ENCODE measurements at regions of chr19 and their contacts with region 1.

Region 1: DNA sequence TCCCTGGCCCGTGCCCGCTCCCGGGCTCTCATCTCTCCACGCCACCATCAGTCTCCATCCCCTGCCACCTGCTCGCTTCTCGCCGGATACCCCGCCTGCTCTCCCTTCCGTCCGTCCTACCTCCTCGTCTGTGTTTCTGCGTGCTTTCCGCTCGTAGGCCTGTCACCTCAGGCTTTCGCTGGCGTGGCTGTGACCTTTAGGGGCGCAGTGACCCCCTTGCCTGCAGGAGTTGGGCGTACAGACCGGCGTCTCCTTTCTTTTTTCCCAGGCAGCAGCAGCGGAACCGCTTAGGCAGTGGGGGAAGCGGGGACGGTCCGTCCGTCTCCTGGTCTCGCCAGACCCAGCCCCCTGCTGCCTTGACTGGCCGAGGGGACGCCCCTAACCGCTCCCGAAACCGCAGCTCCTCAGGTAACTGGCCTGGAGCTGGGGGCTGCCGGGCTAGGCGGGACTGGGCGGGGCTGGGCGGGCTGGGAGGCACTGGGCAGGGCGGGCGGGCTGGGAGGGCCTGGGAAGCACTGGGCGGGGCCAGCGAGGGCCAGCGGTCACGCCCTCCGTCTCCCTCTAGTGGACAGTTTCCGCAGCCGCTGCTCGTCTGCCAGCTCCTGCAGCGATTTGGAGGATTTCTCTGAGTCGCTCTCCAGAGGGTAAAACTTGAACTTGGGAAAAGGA is 6.3 kb downstream of the PGLYRP1 start:
- DNase-seq: peak; percentile 79 to 89 (median 83)
- ATAC-seq: peak; percentile 81 to 92 (median 86)
- H3K4me3 ChIP-seq: peak overlapping the region; percentile 44 to 91 (median 72)
- H3K27ac ChIP-seq: peak overlapping the region in 2 of 12 donors; percentile 33 to 51
- H3K4me1 ChIP-seq: peaks cover 0 to 28% (median 13%) of the 10 kb centered on the region in 12 donors
- H3K27me3 ChIP-seq: peaks cover 0 to 38% (median 14%) of the 10 kb centered on the region in 9 donors
- CTCF ChIP-seq: peak; percentile 82 to 98 (median 90)
- POLR2A ChIP-seq: no peak

Region 2: DNA sequence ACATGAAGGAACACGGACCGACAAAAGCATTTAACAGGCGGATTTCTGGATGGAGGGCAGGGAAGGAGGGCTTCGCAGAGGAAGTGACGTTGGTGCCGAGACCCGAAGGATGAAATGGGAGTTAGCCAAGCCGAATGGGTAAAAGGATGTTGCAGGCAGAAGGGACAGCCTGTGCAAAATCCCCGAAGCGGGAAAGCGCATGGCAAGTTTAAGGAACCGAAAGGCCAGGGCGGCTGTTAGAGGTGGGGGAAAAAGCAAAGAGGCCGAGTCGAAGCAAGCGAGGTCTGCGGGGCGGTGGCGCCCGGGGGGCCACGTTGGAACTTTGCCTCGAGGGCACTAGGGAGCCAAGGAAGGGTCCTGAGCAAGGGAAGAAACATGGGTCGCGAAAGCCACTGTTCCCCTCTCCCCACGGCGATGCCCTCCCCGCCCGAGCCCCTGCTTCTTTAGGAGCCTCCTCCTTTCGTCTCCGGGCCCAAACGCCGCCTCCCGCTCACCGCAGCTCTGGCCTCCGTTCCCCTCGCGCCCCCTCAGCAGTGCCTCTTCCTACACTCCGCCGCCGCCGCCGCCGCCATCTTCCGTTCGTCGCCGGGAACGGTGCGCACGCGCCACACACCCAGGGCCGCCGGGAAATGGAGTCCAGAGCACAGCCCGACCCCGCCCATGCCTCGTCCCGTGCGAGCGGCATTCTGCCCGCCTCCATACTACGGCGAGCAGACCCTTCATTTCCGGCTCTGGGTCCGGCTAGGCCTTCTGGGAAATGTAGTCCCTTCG is 153.8 kb before region 1 on chr19 and contains the start of gene SYMPK:
- intact Hi-C with region 1: loop called in 1 of 10 experiments (anchors 5 kb)
- DNase-seq: peak; percentile 99
- ATAC-seq: peak; percentile 99 to 100 (median 100)
- H3K4me3 ChIP-seq: peak within 1 kb of the TSS; percentile 65 to 98 (median 92)
- H3K27ac ChIP-seq: peak within 1 kb of the TSS; percentile 80 to 96 (median 92)
- H3K4me1 ChIP-seq: peaks cover 0 to 28% (median 21%) of the 10 kb centered on the region in 12 donors
- H3K27me3 ChIP-seq: peaks cover 8 to 27% (median 16%) of the 10 kb centered on the region in 9 donors
- CTCF ChIP-seq: no peak
- POLR2A ChIP-seq: peak in 1 of 2 donors; percentile 64
- total RNA-seq, gene SYMPK: 21.9 to 47.7 (median 34.8) TPM